GM13977 (cell line): ENCODE measurements at regions of chr4 and their contacts with region 1.

Region 1: DNA sequence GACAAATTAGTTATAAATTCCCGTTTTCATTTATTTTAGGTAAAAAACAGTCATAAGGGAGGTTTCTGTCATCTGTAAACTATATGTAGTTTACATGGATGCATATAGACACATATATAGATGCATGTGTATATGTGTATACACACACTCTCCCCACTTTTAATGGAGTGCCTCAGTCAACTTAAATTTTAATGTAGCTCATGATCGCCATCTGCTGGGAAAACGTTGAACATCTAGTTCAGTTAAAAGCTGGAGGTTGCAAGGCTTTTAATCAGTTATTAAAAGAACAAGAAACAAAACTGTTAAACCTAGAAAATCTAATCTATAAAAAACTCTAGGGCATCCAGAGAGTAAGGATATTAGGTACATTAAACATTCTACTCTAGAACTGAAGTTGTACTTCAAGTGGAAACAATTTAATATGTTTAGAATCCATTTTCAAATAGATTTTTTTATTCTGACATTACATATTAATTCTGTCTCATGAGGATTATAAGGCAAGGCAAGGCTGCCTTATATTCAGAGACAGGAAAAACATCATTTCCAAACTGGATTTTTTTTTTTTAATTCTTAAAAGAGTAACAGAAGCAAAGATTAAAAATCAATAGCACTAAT is 122.6 kb downstream of the SHISA3 start:
- DNase-seq: peak; percentile 23
- CTCF ChIP-seq: peak; percentile 64

Region 2: DNA sequence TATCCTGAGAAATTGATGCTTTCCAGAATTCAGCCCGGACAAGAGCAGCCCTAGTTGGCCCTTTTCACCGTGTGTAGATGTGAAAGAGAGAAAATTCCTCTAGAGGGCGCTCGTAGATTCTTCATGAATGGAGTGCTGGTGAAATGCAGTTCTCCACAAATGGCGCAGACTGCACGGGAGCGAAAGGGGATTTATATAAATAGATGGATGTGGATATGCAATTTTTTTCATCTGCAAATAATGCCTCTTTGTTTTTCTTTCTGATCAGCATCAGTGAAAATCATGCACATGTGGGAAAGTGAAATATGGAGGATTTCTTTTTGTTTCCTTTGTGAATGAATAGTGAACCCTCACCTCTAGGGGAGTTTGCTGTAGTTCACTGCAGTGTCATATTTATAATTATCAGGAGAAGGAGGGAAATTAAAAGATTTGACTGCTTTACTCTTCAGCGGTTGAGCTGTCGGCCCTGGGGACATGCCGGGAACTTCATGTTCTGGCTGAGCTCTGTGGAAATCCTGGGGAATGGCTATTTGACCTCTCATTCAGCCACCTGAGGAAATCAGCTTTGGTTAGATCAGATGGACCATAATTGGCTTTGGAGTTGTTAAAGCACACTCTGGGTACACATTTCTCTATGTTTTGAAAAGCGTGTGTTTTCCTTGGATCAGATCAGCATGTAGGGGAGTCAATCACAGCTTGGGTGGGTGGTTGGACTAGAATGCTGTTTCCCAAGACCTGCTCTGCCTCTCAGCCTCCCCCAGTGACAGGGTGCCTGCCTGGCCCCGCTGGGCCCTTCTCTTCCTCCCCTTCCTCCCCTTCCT is 237.6 kb before region 1 on chr4:
- in situ Hi-C with region 1: loop called (anchors 25 kb)
- DNase-seq: peak; percentile 76
- CTCF ChIP-seq: peak; percentile 69

Region 3: GRCh38 chr4:42344309-42344708 is 175.6 kb before region 1 on chr4:
- in situ Hi-C with region 1: no loop called
- DNase-seq: peak; percentile 39
- CTCF ChIP-seq: no peak